CD14-positive monocyte (primary cell): ENCODE measurements at regions of chr5 and their contacts with region 1.

Region 1: GRCh38 chr5:52787600-52788504 is at the starts of genes ITGA1 and PELO:
- DNase-seq: peak; percentile 17 to 64 (median 35)
- H3K4me3 ChIP-seq: peak within 1 kb of the TSS; percentile 51 to 77 (median 62)
- H3K4me3 Mint-ChIP-seq: peak within 1 kb of the TSS; percentile 94 to 97
- H3K27ac ChIP-seq: peak within 1 kb of the TSS in 1 of 2 donors; percentile 0
- H3K27ac Mint-ChIP-seq: peak within 1 kb of the TSS in 6 of 7 donors; percentile 51 to 75 (median 65)
- H3K4me1 ChIP-seq: peaks cover 43 to 55% of the 10 kb centered on the region in 2 donors
- H3K4me1 Mint-ChIP-seq: peaks cover 62% of the 10 kb centered on the region
- H3K27me3 ChIP-seq: peaks cover 8 to 12% of the 10 kb centered on the region in 2 donors
- H3K27me3 Mint-ChIP-seq: peaks cover 9 to 26% (median 12%) of the 10 kb centered on the region in 3 donors
- CTCF ChIP-seq: no peak
- polyA plus RNA-seq, gene ITGA1: 0.33 to 0.89 (median 0.79) TPM
- polyA plus RNA-seq, gene PELO: 1.8 to 4.4 (median 2.1) TPM

Region 2: DNA sequence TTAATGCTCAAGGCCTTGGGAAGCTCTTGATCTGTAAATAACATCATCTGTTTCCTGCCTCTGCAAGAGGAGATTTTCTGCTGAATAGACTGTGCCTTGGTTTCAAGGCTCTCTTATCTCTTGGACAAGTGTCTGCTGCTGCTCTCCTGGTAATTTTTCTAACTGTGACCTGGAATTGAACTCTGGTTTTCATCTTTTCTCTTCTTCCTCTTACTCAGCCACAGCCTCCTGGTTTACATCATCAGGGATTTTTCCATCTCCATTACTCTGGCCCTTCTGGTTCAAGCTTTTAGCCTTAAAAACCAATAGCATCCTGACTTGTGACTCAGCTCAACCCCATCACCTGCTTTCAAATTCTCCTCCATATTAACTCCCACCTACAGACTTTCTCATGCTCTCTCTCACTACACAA is 49.8 kb before region 1 on chr5:
- intact Hi-C with region 1: no loop called
- DNase-seq: peak in 1 of 3 donors; percentile 9
- H3K4me3 ChIP-seq: no peak overlapping the region
- H3K4me3 Mint-ChIP-seq: no peak overlapping the region
- H3K27ac ChIP-seq: no peak overlapping the region
- H3K27ac Mint-ChIP-seq: peak overlapping the region in 1 of 7 donors; percentile 17
- H3K4me1 ChIP-seq: no peaks in the 10 kb centered on the region
- H3K4me1 Mint-ChIP-seq: peaks cover 2% of the 10 kb centered on the region
- H3K27me3 ChIP-seq: no peaks in the 10 kb centered on the region
- H3K27me3 Mint-ChIP-seq: peaks cover 0 to under 1% (median 0%) of the 10 kb centered on the region in 3 donors
- CTCF ChIP-seq: no peak

Region 3: GRCh38 chr5:52870448-52870847 is 82.6 kb after region 1 on chr5:
- intact Hi-C with region 1: no loop called
- DNase-seq: no peak
- H3K4me3 ChIP-seq: no peak overlapping the region
- H3K4me3 Mint-ChIP-seq: no peak overlapping the region
- H3K27ac ChIP-seq: no peak overlapping the region
- H3K27ac Mint-ChIP-seq: no peak overlapping the region
- H3K4me1 ChIP-seq: no peaks in the 10 kb centered on the region
- H3K4me1 Mint-ChIP-seq: no peaks in the 10 kb centered on the region
- H3K27me3 ChIP-seq: no peaks in the 10 kb centered on the region
- H3K27me3 Mint-ChIP-seq: peaks cover 2 to 8% (median 3%) of the 10 kb centered on the region in 3 donors
- CTCF ChIP-seq: no peak

Region 4: DNA sequence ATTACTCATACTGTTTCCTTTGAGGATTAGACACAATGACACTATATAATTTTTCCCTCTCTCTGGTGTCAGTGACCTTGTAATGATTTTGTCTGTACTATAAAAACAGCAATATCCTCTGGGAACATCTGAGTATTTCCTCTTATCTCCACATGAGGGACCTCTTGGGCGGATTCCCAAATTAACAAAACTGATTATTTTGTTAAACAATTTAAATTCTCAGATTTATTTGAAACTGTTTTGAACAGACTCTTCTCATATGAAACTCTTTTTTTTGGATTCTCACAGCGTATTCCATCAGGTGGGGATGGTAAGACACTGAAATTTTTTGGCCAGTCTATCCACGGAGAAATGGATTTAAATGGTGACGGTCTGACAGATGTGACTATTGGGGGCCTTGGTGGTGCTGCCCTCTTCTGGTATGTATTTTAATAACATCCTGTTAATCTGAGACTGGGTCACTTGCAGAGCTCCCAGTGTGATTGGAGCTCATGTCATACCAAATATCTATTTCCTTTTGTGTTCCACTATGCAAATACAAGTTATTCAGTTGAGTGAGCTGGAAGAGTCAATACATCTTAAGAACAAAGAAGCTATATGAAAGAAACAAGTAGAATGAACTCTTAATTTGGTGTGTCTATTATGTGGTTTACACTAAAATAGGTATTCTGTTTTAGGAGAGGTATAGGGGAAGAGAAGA is 127.5 kb after region 1 on chr5:
- intact Hi-C with region 1: loop called in 1 of 2 experiments (anchors 10 kb)
- DNase-seq: peak; percentile 35 to 59 (median 58)
- H3K4me3 ChIP-seq: peak overlapping the region in 2 of 3 experiments; percentile 38 to 62
- H3K4me3 Mint-ChIP-seq: peak overlapping the region; percentile 54 to 90
- H3K27ac ChIP-seq: no peak overlapping the region
- H3K27ac Mint-ChIP-seq: no peak overlapping the region
- H3K4me1 ChIP-seq: peaks cover 0 to 4% of the 10 kb centered on the region in 2 donors
- H3K4me1 Mint-ChIP-seq: peaks cover 3% of the 10 kb centered on the region
- H3K27me3 ChIP-seq: no peaks in the 10 kb centered on the region
- H3K27me3 Mint-ChIP-seq: peaks cover 0 to 3% (median 2%) of the 10 kb centered on the region in 3 donors
- CTCF ChIP-seq: peak; percentile 91